ENCODE measurements at regions of chr1 and their contacts with region 1.

Region 1: GRCh38 chr1:200139661-200140250 is 112.2 kb downstream of the NR5A2 start:
- DNase-seq: peak; percentile 45
- ATAC-seq: peak; percentile 85
- H3K4me3 Mint-ChIP-seq: no peak overlapping the region
- H3K27ac Mint-ChIP-seq: no peak overlapping the region
- H3K4me1 Mint-ChIP-seq: no peaks in the 10 kb centered on the region
- H3K27me3 Mint-ChIP-seq: no peaks in the 10 kb centered on the region
- CTCF ChIP-seq: peak; percentile 90

Region 2: DNA sequence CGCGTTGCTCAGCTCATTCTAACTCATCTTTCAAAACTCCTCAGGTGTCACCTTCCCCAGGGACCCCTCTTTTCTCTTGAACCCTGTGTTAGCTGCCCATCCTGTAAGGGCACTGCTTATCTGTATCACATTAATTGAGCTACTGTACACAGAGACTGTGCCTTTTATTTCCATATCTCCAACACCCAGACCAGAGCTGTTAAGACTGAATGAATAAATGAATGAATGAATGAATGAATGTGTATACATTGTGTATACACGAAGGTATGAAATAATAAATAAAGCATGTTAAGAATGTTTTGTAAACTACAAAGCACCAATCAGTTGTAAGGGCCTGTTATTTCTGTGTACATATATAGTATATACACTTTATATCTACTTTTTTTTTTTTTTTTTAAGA is 28.1 kb after region 1 on chr1:
- CTCF ChIA-PET with region 1: no interaction called
- POLR2A ChIA-PET with region 1: no interaction called
- intact Hi-C with region 1: no loop called
- DNase-seq: no peak
- ATAC-seq: no peak
- H3K4me3 Mint-ChIP-seq: no peak overlapping the region
- H3K27ac Mint-ChIP-seq: no peak overlapping the region
- H3K4me1 Mint-ChIP-seq: no peaks in the 10 kb centered on the region
- H3K27me3 Mint-ChIP-seq: no peaks in the 10 kb centered on the region
- CTCF ChIP-seq: no peak

Region 3: GRCh38 chr1:200279810-200280411 is 140.2 kb after region 1 on chr1:
- CTCF ChIA-PET with region 1: interaction called, 13 read pairs
- POLR2A ChIA-PET with region 1: no interaction called
- intact Hi-C with region 1: no loop called
- DNase-seq: peak; percentile 51
- ATAC-seq: no peak
- H3K4me3 Mint-ChIP-seq: no peak overlapping the region
- H3K27ac Mint-ChIP-seq: no peak overlapping the region
- H3K4me1 Mint-ChIP-seq: no peaks in the 10 kb centered on the region
- H3K27me3 Mint-ChIP-seq: peaks cover 2% of the 10 kb centered on the region
- CTCF ChIP-seq: peak; percentile 74